ENCODE measurements at regions of chr9 and their contacts with region 1.

Region 1: DNA sequence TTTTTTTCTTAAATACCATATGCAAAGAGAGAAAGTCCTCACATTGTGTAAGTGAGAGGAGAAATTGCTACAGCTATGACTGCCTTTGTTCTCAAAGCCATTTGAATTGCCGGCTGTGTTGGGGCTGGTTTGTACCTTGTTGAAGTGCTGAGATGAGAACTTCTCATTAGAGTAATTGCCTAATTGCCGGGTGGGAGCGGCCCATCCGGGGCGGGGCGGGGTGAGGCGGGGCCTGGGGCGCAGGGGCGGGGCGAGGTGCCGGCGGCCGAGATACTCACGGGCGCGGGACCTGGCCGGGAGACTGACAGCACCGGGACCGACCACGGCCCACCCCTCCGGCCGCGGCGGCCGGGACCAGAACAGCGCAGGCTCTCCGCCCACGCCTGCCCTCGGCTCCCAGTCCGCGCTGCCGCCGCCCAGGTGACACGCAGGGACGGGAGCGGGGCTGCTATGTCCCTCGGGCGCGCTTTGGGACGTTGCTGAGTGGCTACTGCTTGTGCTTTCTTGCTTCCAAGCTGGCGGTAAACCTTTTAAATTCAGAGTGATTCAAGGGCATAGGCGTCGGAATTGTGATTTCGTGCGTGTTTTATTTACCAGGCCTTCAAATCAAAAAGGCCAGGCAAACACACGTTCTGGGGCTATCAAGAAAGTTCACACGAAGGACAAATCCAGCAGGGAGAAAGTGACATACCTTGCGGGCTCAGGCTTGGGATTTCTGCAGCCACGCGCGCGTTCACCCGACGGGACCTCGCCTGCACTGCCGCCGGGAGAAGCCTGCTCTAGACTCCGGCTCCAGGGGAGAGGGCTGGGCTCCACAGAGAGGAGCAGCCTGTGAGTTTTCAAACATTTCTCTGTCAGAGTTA is 269.1 kb downstream of the FANCC start:
- DNase-seq: peak; percentile 63 to 84
- ATAC-seq: peak; percentile 87
- H3K4me3 ChIP-seq: peak overlapping the region; percentile 65 to 89
- H3K27ac ChIP-seq: peak overlapping the region; percentile 89 to 95
- H3K4me1 ChIP-seq: peaks cover 0 to 3% of the 10 kb centered on the region in 2 donors
- H3K27me3 ChIP-seq: no peaks in the 10 kb centered on the region

Region 2: GRCh38 chr9:95010431-95010838 is 38.0 kb before region 1 on chr9:
- intact Hi-C with region 1: loop called (anchors 5 kb)
- DNase-seq: no peak
- ATAC-seq: no peak
- H3K4me3 ChIP-seq: peak overlapping the region; percentile 41 to 43
- H3K27ac ChIP-seq: peak overlapping the region; percentile 74 to 99
- H3K4me1 ChIP-seq: peaks cover 0 to 7% of the 10 kb centered on the region in 2 donors
- H3K27me3 ChIP-seq: no peaks in the 10 kb centered on the region

Region 3: GRCh38 chr9:95080961-95081647 is 32.6 kb after region 1 on chr9:
- intact Hi-C with region 1: loop called (anchors 5 kb)
- DNase-seq: peak in 1 of 2 donors; percentile 71
- ATAC-seq: no peak
- H3K4me3 ChIP-seq: no peak overlapping the region
- H3K27ac ChIP-seq: peak overlapping the region in 1 of 2 donors; percentile 25
- H3K4me1 ChIP-seq: peaks cover 1 to 3% of the 10 kb centered on the region in 2 donors
- H3K27me3 ChIP-seq: no peaks in the 10 kb centered on the region

Measured in aorta (tissue), 5 donors.